ENCODE measurements at regions of chr11 and their contacts with region 1.

Region 1: DNA sequence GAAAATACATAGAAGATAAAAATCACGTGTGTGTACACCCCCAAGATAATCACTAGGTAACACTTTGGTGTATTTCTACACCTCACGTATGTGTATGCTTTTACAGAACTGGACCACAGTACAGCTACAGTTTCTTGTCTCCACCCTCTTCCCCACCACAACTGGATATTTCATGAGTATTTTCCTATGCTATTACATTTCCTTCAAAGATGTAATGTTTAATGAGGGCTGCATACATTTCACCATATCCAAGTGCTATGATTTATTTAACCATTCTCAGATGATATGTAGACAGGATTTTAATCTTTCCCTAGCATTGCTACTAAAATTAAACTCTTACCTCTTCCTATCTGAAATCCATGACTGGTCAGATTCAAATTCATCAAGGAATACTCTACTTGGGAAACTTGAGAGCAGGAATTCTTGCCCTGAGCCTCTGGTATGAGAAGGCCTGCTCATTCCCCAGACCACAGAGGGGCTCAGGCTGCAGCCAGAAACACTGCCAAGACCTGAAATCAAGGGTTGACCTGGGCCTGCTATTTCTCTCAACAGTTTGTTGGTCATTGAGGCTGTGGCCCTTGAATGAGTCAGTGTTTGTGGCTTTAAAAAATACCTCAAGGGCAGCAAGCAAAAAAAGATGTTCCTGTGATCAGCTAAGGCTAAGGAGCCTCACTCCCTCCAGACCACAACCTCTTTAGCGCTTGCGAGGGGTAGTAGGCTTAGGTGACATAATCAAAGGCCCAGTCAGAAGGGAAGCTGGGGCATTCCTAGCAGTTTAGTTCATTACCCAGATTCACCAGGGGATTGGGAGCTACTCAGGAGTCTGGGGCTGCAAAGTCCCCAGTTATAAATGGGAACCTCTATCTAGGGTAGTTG is 55.5 kb downstream of the ABTB2 start:
- DNase-seq: peak; percentile 45
- ATAC-seq: peak; percentile 95
- H3K4me3 ChIP-seq: no peak overlapping the region
- H3K27ac ChIP-seq: no peak overlapping the region
- H3K4me1 ChIP-seq: peaks cover 8% of the 10 kb centered on the region
- H3K27me3 ChIP-seq: no peaks in the 10 kb centered on the region
- CTCF ChIP-seq: no peak
- EP300 ChIP-seq: 0 out of 4 replicates have a peak, but pooled peaks of 1 of the 2 experiments have one; percentile 52
- POLR2A ChIP-seq: no peak
- RAD21 ChIP-seq: peak; percentile 7; the same call in 1 of the 2 replicates

Region 2: DNA sequence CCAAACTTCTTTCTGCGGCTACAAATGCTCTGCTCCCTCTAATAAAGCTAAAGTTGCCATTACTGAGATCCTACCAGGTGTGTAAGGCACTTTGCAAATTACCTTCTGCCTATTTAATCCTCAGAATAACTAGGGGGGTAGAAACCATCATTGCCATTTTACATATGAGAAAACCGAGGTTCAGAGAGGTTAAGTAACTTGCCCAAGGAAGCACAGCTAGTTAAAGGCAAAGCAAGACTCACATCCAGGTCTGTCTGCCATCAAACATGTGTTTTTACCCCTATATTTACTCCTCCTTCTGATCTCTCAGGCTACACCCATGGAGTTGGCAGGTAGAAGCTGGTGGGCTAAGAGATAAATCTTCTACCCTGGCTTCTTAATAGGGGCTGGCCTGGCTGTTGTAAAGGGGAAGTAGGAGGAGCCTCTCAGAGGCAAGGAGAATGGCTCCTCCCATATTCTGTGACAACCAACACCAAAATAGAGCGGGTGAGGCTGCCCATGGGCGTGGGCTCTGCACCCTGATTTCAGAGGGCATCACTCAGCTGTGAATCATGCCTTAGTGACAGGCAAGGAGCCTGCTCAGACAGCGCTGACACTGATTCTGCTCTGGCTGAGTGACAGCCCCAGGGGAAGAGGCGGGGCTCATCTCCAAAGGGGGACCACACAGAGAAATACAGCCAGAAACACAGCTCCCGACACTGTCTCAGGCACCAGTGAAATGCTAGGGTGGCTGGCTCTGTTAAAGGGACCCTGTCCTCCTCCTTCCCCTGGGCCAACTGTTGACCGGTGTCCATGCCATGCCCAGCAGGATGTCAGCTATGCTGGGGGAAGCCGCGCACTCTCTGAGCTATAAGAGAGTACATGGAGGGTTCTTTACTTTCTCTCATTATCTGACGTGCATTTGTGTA is 51.3 kb before region 1 on chr11:
- CTCF ChIA-PET with region 1: no interaction called
- POLR2A ChIA-PET with region 1: interaction called, 4 read pairs
- RAD21 ChIA-PET with region 1: interaction called, 4 read pairs
- SMC1A ChIA-PET with region 1: interaction called, 6 read pairs
- in situ Hi-C with region 1: no loop called
- intact Hi-C with region 1: loop called (anchors 2 kb)
- DNase-seq: no peak
- ATAC-seq: peak; percentile 86
- H3K4me3 ChIP-seq: no peak overlapping the region
- H3K27ac ChIP-seq: no peak overlapping the region
- H3K4me1 ChIP-seq: peaks cover 16% of the 10 kb centered on the region
- H3K27me3 ChIP-seq: no peaks in the 10 kb centered on the region
- CTCF ChIP-seq: no peak
- EP300 ChIP-seq: no peak
- POLR2A ChIP-seq: no peak
- RAD21 ChIP-seq: no peak

Region 3: GRCh38 chr11:34278693-34279297 is 23.5 kb before region 1 on chr11:
- CTCF ChIA-PET with region 1: no interaction called
- POLR2A ChIA-PET with region 1: interaction called, 7 read pairs
- RAD21 ChIA-PET with region 1: interaction called, 8 read pairs
- SMC1A ChIA-PET with region 1: interaction called, 5 read pairs
- in situ Hi-C with region 1: no loop called
- intact Hi-C with region 1: loop called (anchors 2 kb)
- DNase-seq: peak; percentile 32
- ATAC-seq: peak; percentile 88
- H3K4me3 ChIP-seq: no peak overlapping the region
- H3K27ac ChIP-seq: peak overlapping the region; percentile 8; the same call in 1 of the 2 replicates
- H3K4me1 ChIP-seq: peaks cover 6% of the 10 kb centered on the region
- H3K27me3 ChIP-seq: no peaks in the 10 kb centered on the region
- CTCF ChIP-seq: no peak
- EP300 ChIP-seq: no peak
- POLR2A ChIP-seq: no peak
- RAD21 ChIP-seq: no peak

Region 4: DNA sequence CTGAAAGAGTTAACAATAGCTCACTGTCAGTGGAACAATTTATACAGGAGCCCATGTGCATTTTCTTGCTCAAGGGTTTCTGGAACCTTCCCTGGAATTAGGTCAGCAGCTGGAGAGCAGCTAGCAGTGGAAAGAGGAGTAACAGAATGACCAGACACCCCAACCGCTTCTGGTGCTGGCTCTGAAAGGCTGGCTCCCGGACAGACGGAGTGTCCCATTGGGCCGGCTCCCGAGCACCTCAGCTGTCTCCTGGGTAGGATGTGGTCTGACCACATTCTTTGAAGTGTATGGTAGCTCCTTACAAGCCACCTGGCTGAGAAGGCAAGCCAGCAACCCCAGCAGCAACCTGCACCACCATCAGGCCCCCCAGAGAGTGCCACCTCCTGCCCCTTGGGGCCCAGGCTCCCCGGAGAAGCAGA is 10.8 kb after region 1 on chr11:
- CTCF ChIA-PET with region 1: interaction called, 7 read pairs
- POLR2A ChIA-PET with region 1: interaction called, 3 read pairs
- RAD21 ChIA-PET with region 1: no interaction called
- SMC1A ChIA-PET with region 1: interaction called, 11 read pairs
- in situ Hi-C with region 1: no loop called
- intact Hi-C with region 1: no loop called
- DNase-seq: peak; percentile 40
- ATAC-seq: peak; percentile 91
- H3K4me3 ChIP-seq: no peak overlapping the region
- H3K27ac ChIP-seq: no peak overlapping the region
- H3K4me1 ChIP-seq: peaks cover 15% of the 10 kb centered on the region; the same call in 1 of the 2 replicates
- H3K27me3 ChIP-seq: no peaks in the 10 kb centered on the region
- CTCF ChIP-seq: no peak
- EP300 ChIP-seq: 0 out of 4 replicates have a peak, but pooled peaks of 1 of the 2 experiments have one; percentile 32
- POLR2A ChIP-seq: no peak
- RAD21 ChIP-seq: 0 out of 2 replicates have a peak, but pooled peaks have one; percentile 3